Activated CD8-positive, alpha-beta T cell treated with anti-CD3 and anti-CD28 coated beads, Interleukin-2, amount 10 ng/mL, durations not matched to agents 7 days and 5 days (primary cell): ENCODE measurements at regions of chr17 and their contacts with region 1.

Region 1: GRCh38 chr17:5237541-5238016 is 2.9 kb upstream of the SCIMP start:
- DNase-seq: peak; percentile 70
- ATAC-seq: peak; percentile 61
- H3K4me3 Mint-ChIP-seq: no peak overlapping the region
- H3K27ac Mint-ChIP-seq: peak overlapping the region; percentile 36
- H3K4me1 Mint-ChIP-seq: peaks cover 30% of the 10 kb centered on the region
- H3K27me3 Mint-ChIP-seq: no peaks in the 10 kb centered on the region

Region 2: GRCh38 chr17:5191541-5192417 is 45.8 kb before region 1 on chr17 and contains the start of gene ZNF594:
- CTCF ChIA-PET with region 1: interaction called, 22 read pairs
- POLR2A ChIA-PET with region 1: interaction called, 3 read pairs
- DNase-seq: peak; percentile 98
- ATAC-seq: peak; percentile 100
- H3K4me3 Mint-ChIP-seq: peak within 1 kb of the TSS; percentile 93
- H3K27ac Mint-ChIP-seq: peak within 1 kb of the TSS; percentile 96
- H3K4me1 Mint-ChIP-seq: peaks cover 28% of the 10 kb centered on the region
- H3K27me3 Mint-ChIP-seq: no peaks in the 10 kb centered on the region
- total RNA-seq, gene ZNF594: 11.8 to 12.7 TPM

Region 3: GRCh38 chr17:5198472-5198871 is 39.1 kb before region 1 on chr17:
- CTCF ChIA-PET with region 1: interaction called, 22 read pairs
- POLR2A ChIA-PET with region 1: no interaction called
- DNase-seq: no peak
- ATAC-seq: no peak
- H3K4me3 Mint-ChIP-seq: no peak overlapping the region
- H3K27ac Mint-ChIP-seq: peak overlapping the region; percentile 30
- H3K4me1 Mint-ChIP-seq: peaks cover 8% of the 10 kb centered on the region
- H3K27me3 Mint-ChIP-seq: no peaks in the 10 kb centered on the region

Region 4: DNA sequence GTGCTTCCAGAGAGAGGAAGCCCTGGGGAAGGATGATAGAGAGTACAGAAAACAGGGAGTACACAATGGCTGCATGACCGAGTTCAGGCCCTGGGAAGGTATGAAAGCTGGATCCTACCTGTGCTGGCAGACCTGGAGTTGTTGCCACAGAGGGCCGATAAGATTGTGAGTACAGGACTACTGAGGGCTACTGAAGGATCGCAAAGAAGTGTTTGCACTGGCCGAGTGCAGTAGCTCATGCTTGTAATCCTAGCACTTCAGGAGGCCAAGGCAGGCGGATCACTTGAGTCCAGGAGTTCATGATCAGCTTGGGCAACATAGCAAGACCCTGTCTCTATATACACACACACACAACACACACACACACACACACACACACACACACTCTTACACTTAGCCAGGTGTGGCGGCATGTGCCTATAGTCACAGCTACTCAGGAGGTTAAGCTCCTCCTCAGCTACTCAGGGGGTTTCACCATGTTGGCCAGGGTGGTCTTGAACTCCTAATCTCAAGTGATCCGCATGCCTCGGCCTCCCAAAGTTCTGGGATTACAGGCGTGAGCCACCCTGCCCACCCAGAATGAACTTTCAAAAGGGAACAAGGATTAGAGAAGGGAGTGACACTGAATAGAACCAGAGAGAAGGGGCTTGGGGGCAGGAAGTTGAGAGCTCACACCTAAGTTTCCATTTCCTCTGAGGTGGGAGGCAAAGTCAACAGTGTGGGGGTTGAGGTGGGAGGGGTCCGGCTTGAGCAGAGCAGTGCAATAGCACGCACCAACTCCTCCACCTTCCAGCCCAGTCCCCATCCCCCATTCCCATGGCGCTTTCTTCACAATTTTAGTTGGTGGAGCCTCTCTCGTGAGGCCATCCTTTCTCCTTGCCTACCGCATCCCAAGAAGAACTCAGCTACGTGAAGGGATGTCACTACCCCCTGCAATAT is 10.4 kb before region 1 on chr17:
- CTCF ChIA-PET with region 1: interaction called, 16 read pairs
- POLR2A ChIA-PET with region 1: interaction called, 7 read pairs
- DNase-seq: peak; percentile 63
- ATAC-seq: peak; percentile 57
- H3K4me3 Mint-ChIP-seq: peak overlapping the region; percentile 44
- H3K27ac Mint-ChIP-seq: peak overlapping the region; percentile 91
- H3K4me1 Mint-ChIP-seq: peaks cover 33% of the 10 kb centered on the region
- H3K27me3 Mint-ChIP-seq: no peaks in the 10 kb centered on the region

Region 5: DNA sequence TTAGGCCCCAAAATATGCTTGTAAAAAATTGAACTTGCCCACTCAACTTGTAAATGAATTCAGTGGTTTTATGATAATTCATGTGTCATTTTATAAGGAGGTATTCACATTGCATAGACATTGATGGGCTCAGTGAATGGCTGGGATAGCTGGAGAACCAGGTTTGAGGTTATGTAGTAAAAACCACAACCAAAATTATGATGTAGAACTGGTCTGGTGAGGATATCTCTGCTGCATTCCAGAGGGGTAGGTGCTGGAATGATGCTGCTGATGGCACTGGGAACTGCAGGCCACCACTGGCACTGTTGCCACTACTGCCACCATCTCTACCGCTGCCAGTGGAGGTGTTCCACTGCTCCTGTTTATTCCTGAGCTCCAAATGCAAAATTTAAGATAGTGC is 23.0 kb after region 1 on chr17:
- CTCF ChIA-PET with region 1: no interaction called
- POLR2A ChIA-PET with region 1: no interaction called
- DNase-seq: no peak
- ATAC-seq: no peak
- H3K4me3 Mint-ChIP-seq: no peak overlapping the region
- H3K27ac Mint-ChIP-seq: no peak overlapping the region
- H3K4me1 Mint-ChIP-seq: no peaks in the 10 kb centered on the region
- H3K27me3 Mint-ChIP-seq: no peaks in the 10 kb centered on the region